WTC11 (cell line): ENCODE measurements at regions of chr15 and their contacts with region 1.

Region 1: GRCh38 chr15:74799856-74800547 is 12.6 kb upstream of the LMAN1L start:
- DNase-seq: peak; percentile 90
- ATAC-seq: peak; percentile 98
- H3K4me3 Mint-ChIP-seq: no peak overlapping the region
- H3K27ac Mint-ChIP-seq: peak overlapping the region; percentile 36; the same call in 1 of the 2 replicates
- H3K4me1 Mint-ChIP-seq: 0 out of 2 replicates have a peak, but pooled peaks cover 2% of the 10 kb centered on the region
- H3K27me3 Mint-ChIP-seq: no peaks in the 10 kb centered on the region
- CTCF ChIP-seq: peak; percentile 98

Region 2: DNA sequence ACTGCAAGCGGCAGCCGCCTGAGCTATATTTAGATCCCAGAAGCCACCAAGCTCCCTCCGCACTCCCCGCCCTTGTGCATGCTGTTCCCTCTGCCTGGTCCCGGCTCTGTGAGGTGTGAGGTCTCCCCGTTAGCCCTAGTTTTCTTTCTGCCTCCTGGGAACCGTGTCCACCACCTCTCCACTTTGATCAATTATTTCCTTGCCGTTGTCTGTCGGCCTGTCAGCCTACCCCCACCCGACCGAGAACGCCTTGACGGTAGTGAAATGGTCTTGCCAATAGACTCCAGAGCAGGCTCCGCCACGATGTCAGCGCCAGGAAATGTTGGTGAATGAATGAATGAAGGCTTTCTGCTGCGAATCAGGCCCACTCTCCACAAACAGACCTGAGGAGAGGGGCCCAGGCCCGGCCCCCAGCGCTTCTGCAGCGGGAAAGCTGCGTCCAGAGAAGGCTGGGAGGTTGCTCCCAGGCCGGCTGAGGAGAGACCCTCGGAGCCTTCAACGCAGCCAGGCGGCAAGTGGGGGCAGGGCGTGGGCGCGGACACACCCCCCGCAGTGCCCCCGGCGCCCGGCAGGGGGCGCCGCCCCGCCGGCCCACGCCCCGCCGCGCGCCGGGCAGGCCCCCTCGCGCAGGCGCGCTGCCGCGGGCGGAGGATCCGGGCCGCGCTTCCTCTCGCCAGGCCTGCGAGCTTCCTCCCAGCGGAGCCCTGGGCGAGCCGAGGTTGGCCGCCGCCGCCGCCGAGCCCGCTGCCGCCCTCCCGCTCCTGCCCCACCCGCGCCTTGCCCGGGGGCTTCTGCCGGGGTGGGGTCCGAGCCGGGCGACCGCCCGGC is 18.4 kb before region 1 on chr15 and contains the start of gene CSK:
- CTCF ChIA-PET with region 1: interaction called, 24 read pairs
- POLR2A ChIA-PET with region 1: no interaction called
- DNase-seq: peak; percentile 58
- ATAC-seq: peak; percentile 66
- H3K4me3 Mint-ChIP-seq: peak within 1 kb of the TSS; percentile 83
- H3K27ac Mint-ChIP-seq: no peak within 1 kb of the TSS
- H3K4me1 Mint-ChIP-seq: peaks cover 50% of the 10 kb centered on the region
- H3K27me3 Mint-ChIP-seq: peaks cover 26% of the 10 kb centered on the region
- CTCF ChIP-seq: peak; percentile 49; the same call in 1 of the 2 replicates
- total RNA-seq, gene CSK: 55.1 to 55.9 TPM (median 55.3 TPM) in 3 replicates

Region 3: DNA sequence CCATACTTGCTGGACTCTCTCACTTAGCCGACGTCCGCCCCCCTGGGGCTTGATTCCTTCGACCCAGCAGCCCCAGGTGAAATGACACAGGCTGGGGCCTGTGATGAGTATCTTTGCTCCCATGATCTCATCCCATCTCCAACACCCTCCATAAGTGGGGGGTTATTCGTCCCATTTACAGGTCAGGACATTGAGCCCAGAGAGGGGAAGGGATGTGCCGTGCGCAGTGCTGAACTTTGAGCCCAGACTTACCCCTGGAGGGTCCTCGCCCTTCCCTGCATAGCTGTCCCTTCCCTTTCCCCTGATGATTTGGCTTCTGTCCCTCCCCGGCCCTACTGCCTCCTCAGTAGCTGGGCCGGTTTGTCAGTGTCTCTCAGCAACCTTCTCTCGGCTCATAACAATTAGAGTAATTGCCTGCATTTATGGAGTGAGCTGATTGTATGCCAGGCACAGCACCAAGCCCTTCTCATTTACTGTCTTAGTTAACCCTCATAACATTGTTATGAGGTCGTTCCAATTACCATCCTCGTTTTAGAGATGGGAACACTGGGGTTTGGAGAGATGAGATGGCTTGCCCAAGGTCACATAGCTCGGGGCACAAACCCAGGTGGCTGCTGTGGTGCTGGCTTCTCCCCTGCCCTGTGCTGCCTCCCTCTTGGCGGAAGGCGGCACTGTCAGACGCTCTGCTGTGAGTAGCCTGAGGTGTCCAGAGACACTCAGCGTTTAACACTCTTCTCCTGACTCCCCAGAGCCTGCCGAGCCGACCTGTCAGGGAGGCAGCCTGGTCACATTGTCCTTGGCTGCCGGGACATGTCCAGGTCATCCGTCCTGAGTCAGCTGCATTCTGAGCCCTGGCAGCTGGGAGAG is 17.0 kb after region 1 on chr15:
- CTCF ChIA-PET with region 1: interaction called, 13 read pairs
- POLR2A ChIA-PET with region 1: no interaction called
- DNase-seq: no peak
- ATAC-seq: peak; percentile 61
- H3K4me3 Mint-ChIP-seq: no peak overlapping the region
- H3K27ac Mint-ChIP-seq: peak overlapping the region; percentile 79
- H3K4me1 Mint-ChIP-seq: peaks cover 20% of the 10 kb centered on the region
- H3K27me3 Mint-ChIP-seq: no peaks in the 10 kb centered on the region; the same call in 1 of the 2 replicates
- CTCF ChIP-seq: no peak

Region 4: DNA sequence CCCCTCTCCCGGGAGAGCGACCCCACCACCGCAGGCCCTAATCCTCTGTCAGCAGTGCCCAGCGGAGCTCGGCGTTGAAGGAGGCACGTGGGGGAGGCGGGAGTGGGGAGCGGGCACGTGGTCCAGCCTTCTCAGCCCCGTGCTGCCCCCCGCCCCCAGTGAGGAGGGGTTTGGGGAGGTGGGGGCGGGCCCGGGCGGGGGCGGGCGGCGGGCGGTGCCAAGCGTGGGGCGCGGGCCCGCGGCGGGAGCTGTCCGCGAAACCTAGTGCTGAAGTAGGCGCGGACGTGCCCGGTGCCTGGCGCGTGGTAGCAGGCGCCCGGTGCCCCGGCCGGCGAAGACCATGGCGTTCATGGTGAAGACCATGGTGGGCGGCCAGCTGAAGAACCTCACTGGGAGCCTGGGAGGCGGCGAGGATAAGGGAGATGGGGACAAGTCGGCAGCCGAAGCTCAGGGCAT is 26.4 kb after region 1 on chr15 and contains the start of gene CPLX3:
- CTCF ChIA-PET with region 1: interaction called, 10 read pairs
- POLR2A ChIA-PET with region 1: no interaction called
- DNase-seq: peak; percentile 58
- ATAC-seq: peak; percentile 55
- H3K4me3 Mint-ChIP-seq: peak within 1 kb of the TSS; percentile 47
- H3K27ac Mint-ChIP-seq: no peak within 1 kb of the TSS
- H3K4me1 Mint-ChIP-seq: peaks cover 11% of the 10 kb centered on the region
- H3K27me3 Mint-ChIP-seq: peaks cover 57% of the 10 kb centered on the region
- CTCF ChIP-seq: no peak
- total RNA-seq, gene CPLX3: 0.09 to 0.21 TPM (median 0.09 TPM) in 3 replicates

Region 5: GRCh38 chr15:75138016-75138999 is 338.3 kb after region 1 on chr15:
- CTCF ChIA-PET with region 1: no interaction called
- POLR2A ChIA-PET with region 1: no interaction called
- DNase-seq: no peak
- ATAC-seq: no peak; the same call in 1 of the 2 replicates
- H3K4me3 Mint-ChIP-seq: no peak overlapping the region
- H3K27ac Mint-ChIP-seq: no peak overlapping the region
- H3K4me1 Mint-ChIP-seq: no peaks in the 10 kb centered on the region
- H3K27me3 Mint-ChIP-seq: peaks cover 16% of the 10 kb centered on the region
- CTCF ChIP-seq: no peak